ENCODE measurements at regions of chr3 and their contacts with region 1.

Region 1: DNA sequence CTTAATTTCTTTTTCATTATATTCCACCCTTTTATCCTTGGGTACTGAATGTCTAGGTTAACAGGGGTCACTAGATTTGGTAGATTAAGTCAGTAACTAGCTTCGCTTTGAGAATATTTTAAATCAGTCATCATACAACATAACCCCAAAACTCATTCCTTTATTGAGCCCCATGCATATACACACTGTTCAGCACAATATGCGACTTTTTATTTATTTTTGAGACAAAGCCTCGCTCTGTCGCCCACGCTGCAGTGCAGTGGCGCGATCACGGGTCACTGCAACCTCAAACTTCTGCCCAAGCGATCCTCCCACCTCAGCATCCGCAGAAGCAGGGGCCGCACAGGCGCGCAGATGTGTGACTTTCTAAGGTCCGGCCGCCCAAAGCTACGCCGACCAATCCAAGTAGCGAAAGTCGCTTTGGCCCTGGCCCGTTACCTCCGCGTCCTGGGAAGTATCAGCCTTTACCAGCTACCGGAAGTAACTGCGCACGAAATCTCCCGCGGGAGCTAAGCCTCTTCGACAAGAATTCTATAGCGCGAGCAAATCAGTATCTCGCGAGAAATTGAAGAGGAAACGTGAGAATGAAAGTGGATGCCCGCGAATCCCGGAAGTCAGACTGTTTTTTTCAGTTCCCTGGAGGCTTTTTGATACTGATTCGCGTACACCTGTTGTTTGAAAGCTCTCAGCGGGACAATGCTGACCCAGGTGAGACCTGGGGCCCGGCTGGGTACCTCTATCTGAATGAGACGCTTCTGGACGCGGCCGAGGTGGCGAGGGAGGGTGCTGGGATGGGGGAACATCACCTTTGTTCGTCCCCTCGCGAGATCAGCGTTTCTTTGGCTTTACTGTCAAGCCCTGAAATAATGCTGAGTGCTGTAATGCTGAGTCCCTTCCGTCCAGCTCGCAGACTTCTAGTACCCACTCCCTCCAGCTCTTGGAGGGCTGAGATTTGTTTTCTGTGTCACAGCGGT is at the starts of genes DHFR2 and NSUN3:
- DNase-seq: peak; percentile 93 to 94 (median 94)
- ATAC-seq: peak; percentile 95 to 98 (median 97)
- H3K4me3 ChIP-seq: peak within 1 kb of the TSS; percentile 56 to 85 (median 62)
- H3K27ac ChIP-seq: peak within 1 kb of the TSS; percentile 61 to 90 (median 89)
- H3K4me1 ChIP-seq: peaks cover 0 to 16% (median 3%) of the 10 kb centered on the region in 4 donors
- H3K27me3 ChIP-seq: no peaks in the 10 kb centered on the region
- CTCF ChIP-seq: no peak
- POLR2A ChIP-seq: peak; percentile 60
- total RNA-seq, gene DHFR2: 3.3 to 5.7 (median 4.1) TPM
- total RNA-seq, gene NSUN3: 4.9 to 6.2 (median 5.6) TPM

Region 2: DNA sequence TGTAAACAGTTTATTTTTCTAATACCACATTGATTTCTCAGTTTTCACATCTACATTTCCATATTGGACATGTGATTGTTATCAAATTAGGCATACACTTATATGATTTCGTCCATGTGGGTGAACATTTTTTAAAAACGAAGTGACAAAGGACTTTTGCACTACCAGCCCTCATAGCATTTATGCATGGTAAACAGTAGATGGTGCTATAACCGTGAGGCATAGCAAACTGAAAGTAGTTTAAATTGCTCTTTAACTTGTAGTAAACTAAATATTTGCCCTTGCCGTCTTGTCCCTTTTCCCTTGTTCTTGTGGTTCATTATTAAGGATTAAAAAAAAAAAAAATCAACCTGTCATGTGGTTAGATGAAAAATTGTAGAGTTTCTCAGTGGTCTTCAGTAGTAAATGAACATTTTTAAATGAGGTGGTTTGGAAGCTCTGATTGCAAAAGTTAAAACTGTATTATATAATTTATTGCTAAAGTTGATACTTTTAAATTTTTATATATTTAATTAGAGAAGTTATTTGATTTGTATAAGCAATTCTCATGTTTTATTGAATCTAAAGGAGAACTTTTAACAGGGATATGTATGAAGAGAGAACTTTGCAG is 58.3 kb before region 1 on chr3:
- intact Hi-C with region 1: loop called in 1 of 2 experiments (anchors 10 kb)
- DNase-seq: no peak
- ATAC-seq: peak; percentile 95 to 98 (median 96)
- H3K4me3 ChIP-seq: peak overlapping the region in 2 of 3 donors; percentile 4 to 20
- H3K27ac ChIP-seq: no peak overlapping the region
- H3K4me1 ChIP-seq: peaks cover 0 to 10% (median 0%) of the 10 kb centered on the region in 4 donors
- H3K27me3 ChIP-seq: no peaks in the 10 kb centered on the region
- CTCF ChIP-seq: peak; percentile 59 to 89 (median 86)
- POLR2A ChIP-seq: no peak